Activated naive CD4-positive, alpha-beta T cell treated with anti-CD3 and anti-CD28 coated beads for 36 hours (primary cell): ENCODE measurements at regions of chr4 and their contacts with region 1.

Region 1: DNA sequence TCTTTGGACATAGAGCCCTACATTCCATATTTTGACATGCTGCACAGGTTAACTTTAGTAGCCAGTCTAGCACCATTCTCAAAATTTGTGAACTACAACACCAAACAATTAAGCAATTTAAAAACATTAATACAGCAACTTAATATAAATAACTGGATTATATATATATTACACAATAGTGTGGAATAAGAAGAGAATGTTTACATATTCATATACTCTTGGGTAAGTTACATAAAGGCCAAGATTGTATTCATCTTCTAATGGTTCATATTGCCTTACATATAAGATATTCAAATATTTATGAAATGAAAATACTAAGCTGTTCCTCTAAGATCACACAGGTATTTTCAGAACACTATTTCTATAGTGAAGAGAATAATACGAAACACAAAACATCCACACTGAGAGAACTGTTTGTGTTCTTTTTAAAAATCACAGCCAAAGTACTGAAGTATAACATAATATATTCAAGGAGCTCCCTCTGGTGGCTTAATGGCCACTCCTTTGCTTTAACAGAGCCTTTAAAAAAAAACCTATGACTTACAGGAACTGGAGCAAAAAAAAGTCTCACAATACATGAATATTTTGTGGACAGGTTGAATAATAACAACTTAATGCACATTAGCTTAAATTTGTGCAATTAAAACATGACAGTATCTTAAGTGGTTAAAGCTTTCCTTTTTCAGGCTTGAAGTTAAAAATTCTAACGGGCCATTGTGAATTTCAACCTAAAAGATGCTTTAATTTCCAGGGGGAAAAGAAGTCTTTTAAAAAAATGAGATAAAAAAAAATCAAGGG is 46.2 kb downstream of the NEK1 start:
- DNase-seq: peak; percentile 47
- H3K4me3 Mint-ChIP-seq: no peak overlapping the region
- H3K27ac Mint-ChIP-seq: no peak overlapping the region
- H3K4me1 Mint-ChIP-seq: peaks cover 7% of the 10 kb centered on the region
- H3K27me3 Mint-ChIP-seq: no peaks in the 10 kb centered on the region

Region 2: DNA sequence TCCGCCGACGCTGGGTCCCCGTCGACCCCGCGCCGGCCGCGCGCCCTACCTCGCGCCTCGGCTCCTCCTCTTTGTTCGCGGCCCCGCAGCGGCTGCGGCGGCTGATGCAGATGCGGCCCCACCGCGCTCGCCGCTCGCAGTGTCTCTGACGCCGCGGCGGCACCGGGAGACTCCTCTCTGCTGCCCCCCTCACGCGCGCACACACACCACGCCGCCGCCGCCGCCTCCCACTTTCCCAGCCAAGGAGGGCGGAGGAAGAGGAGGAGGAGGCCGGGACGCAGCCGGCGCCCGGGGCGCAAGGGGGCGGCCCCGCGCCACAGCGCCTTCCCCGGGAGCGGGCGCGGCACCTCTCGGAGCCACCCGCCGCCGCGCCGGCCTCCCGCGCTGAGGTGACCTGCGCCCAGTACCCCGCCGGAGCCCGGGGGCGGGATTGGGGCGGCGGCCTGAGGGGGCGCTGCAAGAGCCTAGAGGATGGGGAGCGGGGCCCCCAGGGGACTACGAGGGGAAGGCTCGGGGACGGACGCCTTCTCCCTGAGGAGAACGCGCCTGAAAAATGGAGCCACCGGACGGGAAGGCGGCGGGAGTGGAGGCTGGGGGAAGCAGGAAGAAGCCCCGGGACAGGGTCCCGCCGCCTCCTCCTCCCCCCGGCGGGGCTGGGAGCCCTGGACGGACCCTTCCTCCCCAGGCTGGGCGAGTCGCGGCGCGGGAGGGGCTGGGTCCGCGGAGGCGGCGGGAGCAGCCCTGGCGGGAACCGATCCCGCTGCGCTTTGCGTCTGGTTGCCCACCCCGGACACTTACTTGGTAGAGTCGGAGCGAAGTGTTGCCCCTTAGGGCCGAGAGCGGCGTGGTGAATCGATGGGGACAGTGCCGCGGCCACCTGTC is 295.2 kb before region 1 on chr4 and contains the start of gene SH3RF1:
- CTCF ChIA-PET with region 1: no interaction called
- intact Hi-C with region 1: loop called (anchors 10 kb)
- DNase-seq: peak; percentile 49
- H3K4me3 Mint-ChIP-seq: peak within 1 kb of the TSS; percentile 77
- H3K27ac Mint-ChIP-seq: no peak within 1 kb of the TSS
- H3K4me1 Mint-ChIP-seq: peaks cover 3% of the 10 kb centered on the region
- H3K27me3 Mint-ChIP-seq: peaks cover 49% of the 10 kb centered on the region
- total RNA-seq, gene SH3RF1: 0.22 to 0.55 TPM

Region 3: DNA sequence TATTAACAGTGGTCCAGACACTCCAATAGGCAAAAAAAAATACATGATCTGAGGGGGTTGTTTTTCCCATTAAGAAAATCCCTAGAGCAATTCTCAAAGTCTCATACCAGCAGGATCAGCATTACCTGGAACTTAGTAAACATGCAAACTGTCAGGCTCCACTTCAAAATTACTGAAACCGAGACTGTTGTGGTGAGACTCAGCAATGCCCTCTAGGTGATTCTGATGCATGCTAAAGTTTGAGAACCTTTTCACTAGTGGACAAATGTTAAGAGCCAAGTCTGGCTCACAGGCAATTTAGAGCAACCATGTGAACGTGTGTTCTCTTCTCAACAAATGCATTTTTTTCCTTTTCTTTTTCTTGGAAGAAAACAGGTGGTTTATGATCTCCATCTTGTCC is 16.0 kb after region 1 on chr4:
- CTCF ChIA-PET with region 1: interaction called, 13 read pairs
- intact Hi-C with region 1: no loop called
- DNase-seq: no peak
- H3K4me3 Mint-ChIP-seq: no peak overlapping the region
- H3K27ac Mint-ChIP-seq: no peak overlapping the region
- H3K4me1 Mint-ChIP-seq: no peaks in the 10 kb centered on the region
- H3K27me3 Mint-ChIP-seq: no peaks in the 10 kb centered on the region

Region 4: DNA sequence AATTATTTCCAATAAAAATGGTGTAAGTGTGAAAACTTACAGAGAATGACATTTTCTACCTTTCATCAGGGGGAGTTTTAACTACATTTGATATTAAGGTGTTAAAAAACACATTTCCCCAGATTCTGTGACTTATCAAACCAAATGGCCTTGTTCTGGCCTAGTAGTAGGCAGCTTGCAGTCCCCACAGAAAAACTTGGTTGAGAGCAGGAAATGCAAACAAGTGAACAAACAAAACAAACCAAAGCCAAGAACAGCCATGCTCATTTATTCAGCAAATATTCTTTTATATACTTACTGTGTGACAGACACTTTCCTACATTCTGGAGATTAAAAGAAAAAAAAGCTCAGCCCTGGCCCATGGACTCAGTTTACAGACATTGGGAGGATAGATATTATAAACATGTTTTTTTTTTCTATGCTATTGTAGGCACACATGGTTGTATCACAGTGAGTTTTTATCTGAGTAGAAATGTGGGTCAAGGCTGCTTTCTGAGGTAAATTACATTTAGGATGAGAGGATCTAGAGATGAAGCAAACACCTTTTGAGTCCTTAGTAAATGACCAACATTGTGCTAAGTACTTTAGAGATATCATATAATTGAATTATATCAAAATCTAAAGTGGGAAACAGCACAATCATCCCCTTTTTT is 972.7 kb after region 1 on chr4:
- CTCF ChIA-PET with region 1: no interaction called
- intact Hi-C with region 1: no loop called
- DNase-seq: no peak
- H3K4me3 Mint-ChIP-seq: no peak overlapping the region
- H3K27ac Mint-ChIP-seq: no peak overlapping the region
- H3K4me1 Mint-ChIP-seq: no peaks in the 10 kb centered on the region
- H3K27me3 Mint-ChIP-seq: no peaks in the 10 kb centered on the region